CD14-positive monocyte (primary cell): ENCODE measurements at regions of chr2 and their contacts with region 1.

Region 1: DNA sequence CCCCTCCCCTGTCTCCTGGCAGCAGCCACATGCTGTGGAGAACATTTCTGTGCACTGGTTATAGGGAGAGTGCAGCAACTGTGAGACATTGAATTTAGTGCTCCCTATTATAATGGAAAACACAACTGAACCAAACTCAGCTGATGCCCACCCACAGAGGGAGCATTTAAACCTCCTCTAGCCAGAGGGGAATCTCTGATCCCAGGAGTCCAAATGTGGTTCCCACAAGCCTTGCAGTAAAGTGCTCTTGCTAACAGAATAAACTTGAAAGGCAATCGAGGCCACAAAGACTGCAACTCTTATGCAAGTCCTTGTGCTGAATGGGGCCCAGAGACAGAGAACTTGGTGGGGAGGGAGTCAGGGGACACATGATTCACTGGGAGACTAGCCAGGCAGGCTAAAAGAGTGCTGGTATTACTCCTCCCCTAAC is 638.8 kb upstream of the VRK2 start:
- DNase-seq: no peak
- H3K4me3 ChIP-seq: no peak overlapping the region
- H3K4me3 Mint-ChIP-seq: no peak overlapping the region
- H3K27ac ChIP-seq: no peak overlapping the region
- H3K27ac Mint-ChIP-seq: no peak overlapping the region
- H3K4me1 ChIP-seq: no peaks in the 10 kb centered on the region
- H3K4me1 Mint-ChIP-seq: no peaks in the 10 kb centered on the region
- H3K27me3 ChIP-seq: no peaks in the 10 kb centered on the region
- H3K27me3 Mint-ChIP-seq: no peaks in the 10 kb centered on the region
- CTCF ChIP-seq: no peak

Region 2: DNA sequence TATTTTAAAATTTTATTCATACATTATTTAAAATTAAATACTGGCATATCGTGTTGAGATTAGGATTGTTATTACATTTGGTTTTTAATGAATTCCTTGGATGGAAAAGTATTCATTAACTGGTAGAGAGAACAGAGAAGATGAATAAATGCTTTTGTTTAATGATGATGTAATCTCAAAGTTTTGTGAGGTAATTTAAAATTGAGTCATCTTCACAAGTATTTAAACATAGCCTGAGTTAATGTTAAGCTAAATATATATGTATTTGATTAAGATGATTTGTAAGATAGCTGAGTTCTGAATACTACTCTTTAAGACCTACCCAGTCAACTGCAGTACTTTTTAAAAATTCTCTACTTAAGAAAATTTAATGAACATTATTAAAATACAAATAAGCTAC is 74.5 kb before region 1 on chr2:
- intact Hi-C with region 1: no loop called
- DNase-seq: no peak
- H3K4me3 ChIP-seq: no peak overlapping the region
- H3K4me3 Mint-ChIP-seq: no peak overlapping the region
- H3K27ac ChIP-seq: no peak overlapping the region
- H3K27ac Mint-ChIP-seq: no peak overlapping the region
- H3K4me1 ChIP-seq: no peaks in the 10 kb centered on the region
- H3K4me1 Mint-ChIP-seq: no peaks in the 10 kb centered on the region
- H3K27me3 ChIP-seq: no peaks in the 10 kb centered on the region
- H3K27me3 Mint-ChIP-seq: no peaks in the 10 kb centered on the region
- CTCF ChIP-seq: no peak

Region 3: GRCh38 chr2:57450170-57450569 is 42.4 kb after region 1 on chr2:
- intact Hi-C with region 1: loop called in 1 of 2 experiments (anchors 10 kb)
- DNase-seq: no peak
- H3K4me3 ChIP-seq: no peak overlapping the region
- H3K4me3 Mint-ChIP-seq: no peak overlapping the region
- H3K27ac ChIP-seq: no peak overlapping the region
- H3K27ac Mint-ChIP-seq: no peak overlapping the region
- H3K4me1 ChIP-seq: no peaks in the 10 kb centered on the region
- H3K4me1 Mint-ChIP-seq: peaks cover under 1% of the 10 kb centered on the region
- H3K27me3 ChIP-seq: no peaks in the 10 kb centered on the region
- H3K27me3 Mint-ChIP-seq: no peaks in the 10 kb centered on the region
- CTCF ChIP-seq: no peak